ENCODE measurements at regions of chrX and their contacts with region 1.

Region 1: DNA sequence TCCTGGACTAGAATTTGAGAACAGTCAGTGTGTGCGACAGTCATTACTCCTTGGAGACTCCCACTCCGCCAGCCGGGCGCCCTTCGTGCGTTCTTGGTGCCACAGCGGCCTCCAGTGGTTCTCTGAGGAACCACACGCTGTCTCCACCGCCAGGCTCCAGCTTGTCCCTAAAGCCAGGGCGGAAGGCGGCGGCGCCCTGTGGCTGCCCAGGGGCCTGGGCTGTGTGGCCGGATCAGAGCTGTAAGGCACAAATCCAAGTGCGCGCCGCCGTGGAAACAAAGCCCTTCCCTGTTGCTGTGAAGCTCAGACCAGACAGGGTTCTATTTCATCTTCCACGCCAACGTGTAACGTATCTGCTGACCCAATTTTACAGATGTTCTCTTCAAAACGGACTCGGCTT is 34.2 kb downstream of the IDS start:
- DNase-seq: peak; percentile 70 to 86 (median 76)
- ATAC-seq: peak; percentile 89 to 95 (median 93)
- H3K4me3 ChIP-seq: peak overlapping the region in 1 of 12 donors; percentile 19
- H3K27ac ChIP-seq: no peak overlapping the region
- H3K4me1 ChIP-seq: peaks cover 0 to 6% (median 0%) of the 10 kb centered on the region in 12 donors
- H3K27me3 ChIP-seq: peaks cover 0 to 6% (median 0%) of the 10 kb centered on the region in 9 donors
- CTCF ChIP-seq: peak; percentile 72 to 89 (median 83)
- POLR2A ChIP-seq: no peak

Region 2: DNA sequence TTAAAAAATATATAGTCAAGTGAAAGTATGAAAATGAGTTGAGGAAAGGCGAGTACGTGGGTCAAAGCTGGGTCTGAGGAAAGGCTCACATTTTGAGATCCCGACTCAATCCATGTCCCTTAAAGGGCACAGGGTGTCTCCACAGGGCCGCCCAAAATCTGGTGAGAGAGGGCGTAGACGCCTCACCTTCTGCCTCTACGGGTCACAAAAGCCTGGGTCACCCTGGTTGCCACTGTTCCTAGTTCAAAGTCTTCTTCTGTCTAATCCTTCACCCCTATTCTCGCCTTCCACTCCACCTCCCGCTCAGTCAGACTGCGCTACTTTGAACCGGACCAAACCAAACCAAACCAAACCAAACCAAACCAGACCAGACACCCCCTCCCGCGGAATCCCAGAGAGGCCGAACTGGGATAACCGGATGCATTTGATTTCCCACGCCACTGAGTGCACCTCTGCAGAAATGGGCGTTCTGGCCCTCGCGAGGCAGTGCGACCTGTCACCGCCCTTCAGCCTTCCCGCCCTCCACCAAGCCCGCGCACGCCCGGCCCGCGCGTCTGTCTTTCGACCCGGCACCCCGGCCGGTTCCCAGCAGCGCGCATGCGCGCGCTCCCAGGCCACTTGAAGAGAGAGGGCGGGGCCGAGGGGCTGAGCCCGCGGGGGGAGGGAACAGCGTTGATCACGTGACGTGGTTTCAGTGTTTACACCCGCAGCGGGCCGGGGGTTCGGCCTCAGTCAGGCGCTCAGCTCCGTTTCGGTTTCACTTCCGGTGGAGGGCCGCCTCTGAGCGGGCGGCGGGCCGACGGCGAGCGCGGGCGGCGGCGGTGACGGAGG is 1559.5 kb before region 1 on chrX and contains the start of gene FMR1:
- intact Hi-C with region 1: loop called in 1 of 10 experiments (anchors 10 kb)
- DNase-seq: peak; percentile 93 to 96 (median 94)
- ATAC-seq: peak; percentile 92 to 98 (median 96)
- H3K4me3 ChIP-seq: peak within 1 kb of the TSS; percentile 53 to 97 (median 76)
- H3K27ac ChIP-seq: peak within 1 kb of the TSS; percentile 77 to 93 (median 87)
- H3K4me1 ChIP-seq: peaks cover 0 to 31% (median 6%) of the 10 kb centered on the region in 12 donors
- H3K27me3 ChIP-seq: no peaks in the 10 kb centered on the region
- CTCF ChIP-seq: no peak
- POLR2A ChIP-seq: peak in 1 of 2 donors; percentile 53
- total RNA-seq, gene FMR1: 14.4 to 35.7 (median 25.4) TPM

Region 3: DNA sequence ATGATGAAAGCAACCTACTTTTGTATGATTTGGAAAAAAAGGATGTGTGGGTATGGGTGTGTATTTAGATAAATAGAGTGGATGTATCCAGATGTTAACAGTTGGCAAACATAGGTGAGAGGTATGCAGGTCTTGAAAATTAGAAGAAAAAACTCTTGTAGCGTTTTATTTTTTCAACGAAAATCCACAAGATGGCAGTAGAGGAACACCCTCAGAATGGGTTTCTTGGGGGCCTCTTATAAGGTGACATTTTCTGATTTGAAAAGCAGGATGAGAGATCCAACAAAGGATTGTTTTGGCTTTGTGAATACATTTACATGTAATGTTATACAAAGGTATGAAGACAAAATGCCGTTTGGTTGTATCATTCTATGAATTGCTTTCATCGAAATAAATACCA is 1421.5 kb before region 1 on chrX:
- intact Hi-C with region 1: loop called in 7 of 10 experiments (anchors 1 to 5 kb)
- DNase-seq: no peak
- ATAC-seq: no peak
- H3K4me3 ChIP-seq: no peak overlapping the region
- H3K27ac ChIP-seq: no peak overlapping the region
- H3K4me1 ChIP-seq: no peaks in the 10 kb centered on the region
- H3K27me3 ChIP-seq: no peaks in the 10 kb centered on the region
- CTCF ChIP-seq: peak; percentile 31 to 68 (median 50)
- POLR2A ChIP-seq: no peak

Region 4: DNA sequence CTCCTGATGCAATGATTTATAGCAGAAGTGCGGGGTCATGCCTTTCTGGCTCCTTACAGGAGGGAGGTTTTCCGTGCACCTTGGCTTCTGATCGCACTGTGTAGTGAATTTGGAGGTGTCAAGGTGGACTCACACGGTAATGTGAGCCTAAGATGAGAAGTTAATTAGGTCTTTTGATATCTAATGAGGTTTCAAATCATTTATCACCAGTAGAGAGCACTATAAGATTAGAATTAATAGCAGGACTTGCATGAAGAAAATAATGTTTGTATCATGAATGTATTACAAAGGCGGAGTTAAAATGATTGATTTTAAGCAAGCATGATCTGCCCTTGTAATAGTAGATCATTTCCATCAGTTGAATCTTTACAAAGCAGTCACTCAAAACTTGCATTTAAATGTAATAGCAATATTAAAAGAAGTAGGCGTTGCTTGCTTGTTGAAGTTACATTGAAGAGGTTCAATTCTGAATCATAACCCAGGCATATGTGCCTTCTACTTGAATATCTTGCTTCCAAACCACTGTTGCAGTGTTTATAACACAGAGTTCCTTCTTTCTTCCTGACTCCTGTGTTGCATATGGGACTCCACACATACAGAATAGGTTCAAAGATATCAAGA is 1337.7 kb before region 1 on chrX:
- intact Hi-C with region 1: loop called in 2 of 10 experiments (anchors 10 kb)
- DNase-seq: no peak
- ATAC-seq: no peak
- H3K4me3 ChIP-seq: no peak overlapping the region
- H3K27ac ChIP-seq: no peak overlapping the region
- H3K4me1 ChIP-seq: no peaks in the 10 kb centered on the region
- H3K27me3 ChIP-seq: no peaks in the 10 kb centered on the region
- CTCF ChIP-seq: peak in 2 of 12 donors; percentile 18 to 36
- POLR2A ChIP-seq: no peak

Region 5: DNA sequence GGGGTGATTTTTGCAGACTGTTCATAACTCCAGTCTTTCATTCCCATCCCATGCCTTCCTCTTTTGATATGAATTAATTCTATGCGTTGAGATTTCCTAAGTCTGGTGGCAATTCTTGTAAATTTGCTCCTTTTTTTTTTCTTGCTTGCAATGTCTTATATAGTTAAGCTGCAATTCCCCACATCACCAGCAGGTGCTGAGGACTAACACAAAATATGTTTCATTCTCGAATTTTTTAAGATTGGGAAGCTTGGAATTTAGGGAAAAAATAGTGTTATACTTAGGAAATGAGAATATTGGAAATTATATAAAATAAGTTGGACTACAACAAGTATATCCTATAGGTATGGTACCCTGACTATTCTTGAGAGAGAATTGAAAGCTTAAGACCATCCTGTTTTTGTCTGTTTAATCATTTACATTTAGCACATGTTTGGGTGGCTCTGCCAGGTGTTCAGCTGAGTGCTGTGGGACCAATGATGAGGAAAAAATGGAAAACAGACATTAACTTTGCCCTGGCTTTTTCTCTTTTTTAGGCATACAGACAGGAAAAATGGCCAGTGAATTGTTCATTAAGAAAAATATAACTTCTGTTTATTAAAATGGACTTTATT is 940.4 kb before region 1 on chrX:
- intact Hi-C with region 1: loop called in 1 of 10 experiments (anchors 5 kb)
- DNase-seq: no peak
- ATAC-seq: no peak
- H3K4me3 ChIP-seq: no peak overlapping the region
- H3K27ac ChIP-seq: no peak overlapping the region
- H3K4me1 ChIP-seq: no peaks in the 10 kb centered on the region
- H3K27me3 ChIP-seq: peaks cover 0 to 4% (median 0%) of the 10 kb centered on the region in 9 donors
- CTCF ChIP-seq: peak; percentile 20 to 72 (median 54)
- POLR2A ChIP-seq: no peak

Region 6: DNA sequence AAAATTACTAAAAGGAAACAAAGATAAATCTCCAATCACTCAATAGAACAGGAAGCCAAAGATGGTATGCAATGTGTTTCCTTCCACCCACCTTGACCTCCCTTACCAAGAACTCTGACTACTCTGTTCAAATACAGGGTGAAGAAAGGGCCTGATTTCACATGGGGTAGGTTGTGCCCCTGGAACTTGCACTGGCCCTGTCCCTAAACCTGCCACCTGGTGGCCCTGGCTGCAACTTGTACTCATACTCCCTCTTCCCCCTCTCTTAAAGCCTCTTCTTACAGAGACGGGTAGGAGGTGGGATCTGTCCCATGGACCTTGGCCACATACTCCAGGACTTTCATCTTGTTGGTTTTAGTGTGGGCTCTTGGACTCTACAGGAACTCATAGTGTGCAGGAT is 178.0 kb after region 1 on chrX:
- intact Hi-C with region 1: no loop called
- DNase-seq: no peak
- ATAC-seq: no peak
- H3K4me3 ChIP-seq: no peak overlapping the region
- H3K27ac ChIP-seq: no peak overlapping the region
- H3K4me1 ChIP-seq: no peaks in the 10 kb centered on the region
- H3K27me3 ChIP-seq: no peaks in the 10 kb centered on the region
- CTCF ChIP-seq: no peak
- POLR2A ChIP-seq: no peak